Activated CD4-positive, alpha-beta T cell treated with anti-CD3 and anti-CD28 coated beads, Interleukin-2, amount 10 ng/mL, durations not matched to agents 24 days and 14 days (primary cell): ENCODE measurements at regions of chr6 and their contacts with region 1.

Region 1: GRCh38 chr6:6793388-6794250 is 205.1 kb downstream of the LY86 start:
- DNase-seq: peak; percentile 64
- H3K4me3 Mint-ChIP-seq: peak overlapping the region; percentile 35
- H3K27ac Mint-ChIP-seq: peak overlapping the region; percentile 35
- H3K4me1 Mint-ChIP-seq: peaks cover 43% of the 10 kb centered on the region
- H3K27me3 Mint-ChIP-seq: peaks cover 4% of the 10 kb centered on the region

Region 2: GRCh38 chr6:6683969-6684833 is 109.4 kb before region 1 on chr6:
- intact Hi-C with region 1: loop called (anchors 5 kb)
- DNase-seq: peak; percentile 72
- H3K4me3 Mint-ChIP-seq: peak overlapping the region; percentile 15
- H3K27ac Mint-ChIP-seq: peak overlapping the region; percentile 2
- H3K4me1 Mint-ChIP-seq: peaks cover 49% of the 10 kb centered on the region
- H3K27me3 Mint-ChIP-seq: peaks cover 2% of the 10 kb centered on the region

Region 3: GRCh38 chr6:6749702-6750491 is 43.7 kb before region 1 on chr6:
- intact Hi-C with region 1: loop called (anchors 2 kb)
- DNase-seq: peak; percentile 84
- H3K4me3 Mint-ChIP-seq: peak overlapping the region; percentile 78
- H3K27ac Mint-ChIP-seq: peak overlapping the region; percentile 63
- H3K4me1 Mint-ChIP-seq: peaks cover 26% of the 10 kb centered on the region
- H3K27me3 Mint-ChIP-seq: peaks cover 10% of the 10 kb centered on the region

Region 4: DNA sequence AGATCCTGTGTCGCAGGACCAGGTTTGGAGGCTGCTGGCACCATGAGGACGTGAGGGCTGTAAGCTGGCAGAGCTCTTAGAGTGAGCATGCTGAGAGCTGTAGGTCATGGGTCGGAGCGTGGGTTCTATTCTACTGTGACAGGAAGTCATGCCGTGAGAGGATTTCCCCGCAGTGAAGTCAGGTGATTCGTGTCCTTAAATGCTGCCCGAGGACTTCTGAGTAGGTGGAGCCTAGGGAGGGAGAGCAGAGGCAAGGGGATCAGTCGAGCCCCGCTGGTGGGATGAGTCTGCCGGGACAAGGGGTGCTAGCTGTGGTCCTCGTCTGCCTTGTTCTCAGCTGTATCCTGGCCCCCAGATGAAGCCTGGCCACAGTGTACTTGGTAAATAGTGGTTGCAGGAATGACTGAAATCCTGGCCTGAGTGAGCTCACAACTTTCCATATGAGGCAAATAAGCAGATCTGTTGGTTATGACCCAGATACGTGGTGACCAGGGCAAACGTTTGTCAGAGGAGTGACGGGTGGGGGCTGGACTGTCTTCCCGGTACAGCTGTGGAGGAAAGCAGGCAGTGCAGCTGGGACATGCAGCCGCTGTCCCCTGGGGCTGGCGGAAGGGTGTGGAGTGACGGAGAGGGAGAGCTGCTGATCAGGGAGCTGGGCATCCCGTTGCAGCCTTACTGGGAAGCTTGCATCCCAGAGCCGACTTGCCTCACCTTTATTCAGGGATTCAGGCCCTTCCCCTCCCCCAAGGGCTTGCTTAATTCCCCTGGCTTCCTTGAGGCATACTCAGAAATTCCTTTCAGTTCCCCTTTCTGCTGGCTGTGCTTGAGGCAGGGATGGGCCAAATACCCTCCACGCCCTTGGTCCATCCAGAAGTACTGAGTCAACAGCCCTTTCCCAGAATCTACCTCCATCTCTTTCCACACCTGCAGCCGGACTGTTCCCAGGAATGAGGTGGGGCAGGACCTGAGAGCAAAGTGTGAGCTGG is 63.2 kb after region 1 on chr6:
- intact Hi-C with region 1: loop called (anchors 1 kb)
- DNase-seq: peak; percentile 84
- H3K4me3 Mint-ChIP-seq: peak overlapping the region; percentile 60
- H3K27ac Mint-ChIP-seq: peak overlapping the region; percentile 89
- H3K4me1 Mint-ChIP-seq: peaks cover 30% of the 10 kb centered on the region
- H3K27me3 Mint-ChIP-seq: peaks cover 7% of the 10 kb centered on the region

Region 5: GRCh38 chr6:7073821-7074525 is 280.4 kb after region 1 on chr6:
- intact Hi-C with region 1: loop called (anchors 2 kb)
- DNase-seq: peak; percentile 89
- H3K4me3 Mint-ChIP-seq: no peak overlapping the region
- H3K27ac Mint-ChIP-seq: peak overlapping the region; percentile 51
- H3K4me1 Mint-ChIP-seq: peaks cover 12% of the 10 kb centered on the region
- H3K27me3 Mint-ChIP-seq: peaks cover 66% of the 10 kb centered on the region